ENCODE measurements at regions of chr7 and their contacts with region 1.

Region 1: GRCh38 chr7:158834878-158835784 is 5.8 kb upstream of the ESYT2 start:
- DNase-seq: no peak
- ATAC-seq: no peak
- H3K4me3 ChIP-seq: peak overlapping the region in 2 of 10 donors; percentile 5 to 18
- H3K27ac ChIP-seq: peak overlapping the region in 6 of 10 donors; percentile 32 to 68 (median 50)
- H3K4me1 ChIP-seq: peaks cover 0 to 15% (median 8%) of the 10 kb centered on the region in 9 donors
- H3K27me3 ChIP-seq: no peaks in the 10 kb centered on the region
- CTCF ChIP-seq: no peak

Region 2: GRCh38 chr7:157676416-157677255 is 1158.5 kb before region 1 on chr7:
- intact Hi-C with region 1: no loop called
- DNase-seq: no peak
- ATAC-seq: no peak
- H3K4me3 ChIP-seq: no peak overlapping the region
- H3K27ac ChIP-seq: no peak overlapping the region
- H3K4me1 ChIP-seq: no peaks in the 10 kb centered on the region
- H3K27me3 ChIP-seq: peaks cover 0 to 79% (median 61%) of the 10 kb centered on the region in 7 donors
- CTCF ChIP-seq: no peak

Region 3: GRCh38 chr7:158704704-158705468 is 130.2 kb before region 1 on chr7 and contains the start of gene NCAPG2:
- intact Hi-C with region 1: loop called in 1 of 10 experiments (anchors 5 kb)
- DNase-seq: peak; percentile 97 to 99
- ATAC-seq: peak; percentile 99
- H3K4me3 ChIP-seq: peak within 1 kb of the TSS; percentile 64 to 100 (median 89)
- H3K27ac ChIP-seq: peak within 1 kb of the TSS; percentile 34 to 96 (median 87)
- H3K4me1 ChIP-seq: peaks cover 3 to 21% (median 8%) of the 10 kb centered on the region in 9 donors
- H3K27me3 ChIP-seq: no peaks in the 10 kb centered on the region
- CTCF ChIP-seq: peak in 6 of 9 donors; percentile 21 to 44 (median 30)
- total RNA-seq, gene NCAPG2: 3.5 to 8.0 (median 4.6) TPM

Region 4: GRCh38 chr7:158924956-158925355 is 89.8 kb after region 1 on chr7:
- intact Hi-C with region 1: no loop called
- DNase-seq: no peak
- ATAC-seq: no peak
- H3K4me3 ChIP-seq: no peak overlapping the region
- H3K27ac ChIP-seq: no peak overlapping the region
- H3K4me1 ChIP-seq: peaks cover 0 to 6% (median 0%) of the 10 kb centered on the region in 9 donors
- H3K27me3 ChIP-seq: no peaks in the 10 kb centered on the region
- CTCF ChIP-seq: no peak

Measured in heart right ventricle (tissue), 16 donors.